CD8-positive, alpha-beta T cell (primary cell): ENCODE measurements at regions of chr17 and their contacts with region 1.

Region 1: DNA sequence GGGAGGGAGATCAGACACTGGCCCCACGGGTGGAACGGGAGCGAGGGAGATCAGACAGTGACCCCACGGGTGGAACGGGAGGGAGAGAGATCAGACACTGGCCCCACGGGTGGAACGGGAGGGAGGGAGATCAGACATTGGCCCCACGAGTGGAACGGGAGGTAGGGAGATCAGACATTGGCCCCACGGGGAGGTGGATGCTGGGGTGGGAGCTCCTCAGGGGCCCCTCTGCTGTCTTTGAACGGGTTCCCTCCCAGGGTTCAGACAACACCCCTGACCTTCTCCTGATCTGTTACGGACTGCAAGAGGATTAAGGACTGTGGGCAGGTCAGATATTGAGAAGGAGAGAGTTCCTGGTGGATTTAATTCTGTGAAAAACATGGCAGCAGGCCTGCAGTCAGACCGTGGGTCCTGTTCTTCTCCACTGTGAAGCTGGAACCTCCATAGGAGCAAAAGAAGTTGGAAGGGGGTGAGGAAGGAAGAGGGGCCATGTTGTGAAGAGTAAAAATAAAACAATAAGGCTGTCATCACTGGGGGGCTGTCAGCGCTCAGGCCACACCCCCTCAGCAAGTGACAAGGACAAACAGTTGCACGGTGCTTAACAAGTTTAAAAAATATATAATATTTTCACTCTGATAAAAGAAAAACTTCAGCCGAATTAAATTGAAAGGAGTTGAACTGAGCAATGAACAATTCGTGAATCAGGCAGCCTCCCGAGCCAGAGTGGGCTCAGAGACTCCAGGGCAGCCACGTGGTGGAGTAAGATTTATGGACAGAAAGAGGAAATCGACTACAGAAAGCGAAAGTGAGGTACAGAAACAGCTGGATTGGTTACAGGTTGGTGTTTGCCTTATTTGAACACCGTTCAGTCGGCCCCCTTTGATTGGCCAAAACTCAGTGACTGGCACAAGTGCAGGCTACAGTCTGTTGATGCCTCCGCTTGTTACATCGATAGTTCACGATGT is 348.7 kb upstream of the TNRC6C start:
- DNase-seq: peak; percentile 34 to 88 (median 64)
- ATAC-seq: peak; percentile 96
- H3K4me3 ChIP-seq: peak overlapping the region; percentile 23 to 42
- H3K4me3 Mint-ChIP-seq: peak overlapping the region; percentile 78
- H3K27ac ChIP-seq: peak overlapping the region; percentile 51 to 75
- H3K27ac Mint-ChIP-seq: peak overlapping the region; percentile 90
- H3K4me1 ChIP-seq: peaks cover 22% of the 10 kb centered on the region
- H3K4me1 Mint-ChIP-seq: peaks cover 29% of the 10 kb centered on the region
- H3K27me3 ChIP-seq: no peaks in the 10 kb centered on the region
- H3K27me3 Mint-ChIP-seq: no peaks in the 10 kb centered on the region
- CTCF ChIP-seq: no peak

Region 2: DNA sequence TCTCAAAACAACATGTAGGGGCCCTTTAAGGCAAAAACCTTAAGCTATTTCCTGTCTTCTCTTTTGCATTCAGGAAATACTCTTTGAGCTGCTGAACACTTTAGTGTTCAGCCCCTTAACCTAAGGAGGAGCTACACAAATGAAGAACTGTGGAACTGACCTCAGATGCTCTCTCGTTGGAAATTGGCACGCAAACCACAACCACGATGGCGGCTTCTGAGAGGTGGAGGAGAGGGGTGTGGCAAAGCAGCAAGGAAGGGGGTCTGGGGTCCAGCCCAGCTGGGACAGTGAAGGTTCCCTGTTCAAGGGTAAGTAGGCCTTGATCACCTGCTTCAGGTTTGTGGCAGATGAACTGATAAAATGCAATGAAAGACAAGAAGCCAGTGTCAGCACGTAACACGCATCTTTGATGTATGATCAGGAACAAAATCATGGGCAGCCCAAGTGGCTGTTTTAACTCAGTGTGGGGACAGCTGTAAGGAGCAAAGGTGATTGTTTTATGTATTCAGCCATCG is 57.1 kb after region 1 on chr17:
- CTCF ChIA-PET with region 1: no interaction called
- POLR2A ChIA-PET with region 1: interaction called, 11 read pairs
- intact Hi-C with region 1: loop called (anchors 1 to 2 kb)
- DNase-seq: peak; percentile 33 to 91 (median 71)
- ATAC-seq: peak; percentile 89
- H3K4me3 ChIP-seq: peak overlapping the region; percentile 47 to 53
- H3K4me3 Mint-ChIP-seq: peak overlapping the region; percentile 83
- H3K27ac ChIP-seq: peak overlapping the region; percentile 61 to 87
- H3K27ac Mint-ChIP-seq: peak overlapping the region; percentile 97
- H3K4me1 ChIP-seq: peaks cover 33% of the 10 kb centered on the region
- H3K4me1 Mint-ChIP-seq: peaks cover 58% of the 10 kb centered on the region
- H3K27me3 ChIP-seq: no peaks in the 10 kb centered on the region
- H3K27me3 Mint-ChIP-seq: no peaks in the 10 kb centered on the region
- CTCF ChIP-seq: no peak